ENCODE measurements at regions of chr4 and their contacts with region 1.

Region 1: GRCh38 chr4:180655886-180656285 is 1587.3 kb upstream of the TENM3 start:
- DNase-seq: no peak
- H3K4me3 ChIP-seq: no peak overlapping the region
- H3K27ac ChIP-seq: no peak overlapping the region
- H3K4me1 ChIP-seq: no peaks in the 10 kb centered on the region
- CTCF ChIP-seq: no peak

Region 2: GRCh38 chr4:180642732-180643131 is 13.2 kb before region 1 on chr4:
- CTCF ChIA-PET with region 1: interaction called, 3 read pairs
- POLR2A ChIA-PET with region 1: interaction called, 11 read pairs
- intact Hi-C with region 1: no loop called
- DNase-seq: no peak
- H3K4me3 ChIP-seq: no peak overlapping the region
- H3K27ac ChIP-seq: no peak overlapping the region
- H3K4me1 ChIP-seq: no peaks in the 10 kb centered on the region
- CTCF ChIP-seq: no peak